ENCODE measurements at regions of chr18 and their contacts with region 1.

Region 1: DNA sequence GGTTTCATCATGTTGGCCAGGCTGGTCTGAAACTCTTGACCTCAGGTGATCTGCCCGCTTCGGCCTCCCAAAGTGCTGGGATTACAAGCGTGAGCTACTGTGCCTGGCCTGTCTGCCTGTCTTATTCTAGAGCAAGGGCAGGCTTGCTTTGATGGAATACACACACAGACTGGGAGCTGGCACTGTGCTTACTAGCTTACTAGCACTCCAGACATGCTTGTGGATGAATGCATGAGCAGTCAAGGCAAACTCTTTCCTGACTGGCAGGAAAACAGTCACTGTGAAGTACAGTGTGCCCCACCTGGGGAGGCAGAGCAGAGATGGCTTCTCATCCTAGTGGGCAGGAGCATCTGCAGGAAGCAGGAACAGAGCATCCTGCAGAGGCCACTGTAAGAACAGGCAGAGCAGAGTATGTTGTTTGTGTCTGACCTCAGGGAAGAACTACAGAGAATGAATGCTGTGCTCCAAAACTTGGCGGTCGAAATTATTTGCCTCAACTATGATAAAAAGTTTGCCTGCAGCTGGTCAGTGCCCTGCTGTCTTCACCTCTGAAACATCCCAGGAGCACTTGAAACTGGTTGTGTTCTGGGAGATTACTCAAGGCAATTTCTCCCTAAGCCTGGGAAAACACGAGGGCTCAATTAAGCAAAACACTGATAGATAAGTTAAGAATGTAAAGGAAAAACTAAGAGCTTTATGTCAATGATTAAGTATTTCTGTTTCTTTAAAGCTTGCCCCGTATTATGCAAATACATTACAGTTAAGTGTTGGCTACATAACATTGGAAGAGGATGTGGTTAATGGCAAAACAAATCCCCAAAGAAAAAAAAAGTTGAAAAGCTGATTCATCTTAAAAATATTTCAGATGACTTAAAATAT is 102.4 kb downstream of the VAPA start:
- DNase-seq: peak; percentile 63
- ATAC-seq: peak; percentile 66
- H3K4me3 ChIP-seq: no peak overlapping the region
- H3K27ac ChIP-seq: 0 out of 2 replicates have a peak overlapping the region, but pooled peaks have one; percentile 2
- H3K4me1 ChIP-seq: peaks cover 31% of the 10 kb centered on the region
- H3K27me3 ChIP-seq: peaks cover 12% of the 10 kb centered on the region; the same call in 1 of the 2 replicates
- CTCF ChIP-seq: peak; percentile 44; the same call in 1 of the 2 replicates

Region 2: GRCh38 chr18:9466846-9467245 is 549.3 kb before region 1 on chr18:
- CTCF ChIA-PET with region 1: no interaction called
- POLR2A ChIA-PET with region 1: no interaction called
- intact Hi-C with region 1: no loop called
- DNase-seq: no peak
- ATAC-seq: no peak
- H3K4me3 ChIP-seq: no peak overlapping the region
- H3K27ac ChIP-seq: no peak overlapping the region
- H3K4me1 ChIP-seq: no peaks in the 10 kb centered on the region
- H3K27me3 ChIP-seq: no peaks in the 10 kb centered on the region
- CTCF ChIP-seq: no peak

Region 3: GRCh38 chr18:9926223-9926894 is 89.8 kb before region 1 on chr18:
- CTCF ChIA-PET with region 1: no interaction called
- POLR2A ChIA-PET with region 1: no interaction called
- intact Hi-C with region 1: no loop called
- DNase-seq: no peak
- ATAC-seq: no peak; the same call in 1 of the 2 replicates
- H3K4me3 ChIP-seq: no peak overlapping the region
- H3K27ac ChIP-seq: no peak overlapping the region
- H3K4me1 ChIP-seq: peaks cover 27% of the 10 kb centered on the region
- H3K27me3 ChIP-seq: no peaks in the 10 kb centered on the region
- CTCF ChIP-seq: no peak

Region 4: DNA sequence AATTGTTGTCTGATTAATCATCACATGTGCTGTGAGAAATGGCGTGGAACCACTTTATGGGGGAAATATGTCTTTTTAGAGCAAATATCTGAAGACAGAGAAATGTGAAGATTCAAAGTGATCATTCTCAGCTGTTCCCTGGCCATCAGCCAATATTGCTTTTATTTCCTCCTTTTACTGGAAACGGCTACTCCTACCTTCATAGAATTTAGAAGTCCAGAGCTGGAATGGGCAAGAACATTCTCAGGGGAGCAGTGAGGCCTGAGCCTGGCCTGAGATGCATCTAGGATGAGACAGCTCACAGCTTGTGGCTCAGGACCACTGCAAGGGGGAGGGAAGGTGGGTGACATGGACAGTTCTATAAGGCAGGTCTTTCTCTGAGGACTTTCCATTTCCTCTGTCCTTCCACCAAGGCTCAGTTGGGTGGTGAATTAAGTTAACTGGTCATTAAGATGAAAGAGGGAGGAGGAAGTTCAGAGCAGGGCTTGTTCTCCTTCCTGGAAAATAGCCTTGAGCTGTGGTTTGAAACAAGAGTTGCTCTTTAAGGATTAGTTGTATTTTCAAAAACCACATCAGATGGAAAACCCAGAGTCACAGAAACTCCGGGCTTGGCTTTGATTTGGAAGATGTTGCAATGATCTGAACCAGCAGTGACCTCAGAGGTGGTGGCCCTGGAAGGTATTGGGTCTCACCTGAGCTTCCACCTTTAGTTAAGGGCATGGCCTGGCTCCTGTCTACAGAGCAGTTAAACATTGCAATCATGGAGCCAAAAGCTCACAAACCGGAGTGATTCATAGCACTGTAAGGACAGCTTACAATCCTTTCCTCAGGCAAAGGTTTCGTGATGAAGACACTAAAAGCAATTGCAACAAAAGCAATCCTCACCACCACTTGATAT is 42.0 kb after region 1 on chr18:
- CTCF ChIA-PET with region 1: no interaction called
- POLR2A ChIA-PET with region 1: no interaction called
- intact Hi-C with region 1: loop called (anchors 1 kb)
- DNase-seq: peak; percentile 70
- ATAC-seq: peak; percentile 64
- H3K4me3 ChIP-seq: no peak overlapping the region
- H3K27ac ChIP-seq: peak overlapping the region; percentile 84
- H3K4me1 ChIP-seq: peaks cover 21% of the 10 kb centered on the region
- H3K27me3 ChIP-seq: 0 out of 2 replicates have a peak, but pooled peaks cover 5% of the 10 kb centered on the region
- CTCF ChIP-seq: no peak

Measured in PC-3 (cell line).